Right ventricle myocardium inferior (tissue), 1 donor: ENCODE measurements at regions of chr2 and their contacts with region 1.

Region 1: DNA sequence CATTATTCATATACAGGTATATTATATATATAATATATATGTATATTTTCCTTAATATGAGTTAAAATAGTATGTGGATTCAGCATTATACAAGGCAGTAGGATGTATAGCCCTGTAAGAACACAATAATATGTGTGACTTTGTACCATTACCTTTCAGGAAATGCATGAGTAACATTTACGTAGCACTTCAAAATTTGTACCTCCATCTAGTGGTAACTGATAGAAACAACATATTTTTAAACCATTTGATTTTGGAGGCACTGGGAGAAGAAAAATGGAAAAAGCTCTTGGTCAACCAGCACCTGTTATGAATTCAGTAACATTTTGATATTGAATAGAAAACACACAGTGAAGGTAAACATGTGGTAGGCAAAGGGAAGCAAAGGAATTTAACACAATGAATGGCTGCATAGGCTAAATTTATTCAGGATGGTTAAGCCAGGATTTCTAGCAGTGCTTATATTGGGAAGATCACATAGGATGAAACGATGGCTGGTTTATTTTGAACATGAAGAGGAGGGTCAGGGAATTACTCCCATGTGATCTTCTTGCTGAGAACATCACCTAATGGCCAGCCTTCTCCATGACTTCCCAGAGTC is 565.5 kb downstream of the CCDC85A start:
- DNase-seq: no peak
- ATAC-seq: no peak

Region 2: GRCh38 chr2:56288838-56289580 is 460.2 kb before region 1 on chr2:
- intact Hi-C with region 1: loop called (anchors 5 kb)
- DNase-seq: no peak
- ATAC-seq: no peak

Region 3: DNA sequence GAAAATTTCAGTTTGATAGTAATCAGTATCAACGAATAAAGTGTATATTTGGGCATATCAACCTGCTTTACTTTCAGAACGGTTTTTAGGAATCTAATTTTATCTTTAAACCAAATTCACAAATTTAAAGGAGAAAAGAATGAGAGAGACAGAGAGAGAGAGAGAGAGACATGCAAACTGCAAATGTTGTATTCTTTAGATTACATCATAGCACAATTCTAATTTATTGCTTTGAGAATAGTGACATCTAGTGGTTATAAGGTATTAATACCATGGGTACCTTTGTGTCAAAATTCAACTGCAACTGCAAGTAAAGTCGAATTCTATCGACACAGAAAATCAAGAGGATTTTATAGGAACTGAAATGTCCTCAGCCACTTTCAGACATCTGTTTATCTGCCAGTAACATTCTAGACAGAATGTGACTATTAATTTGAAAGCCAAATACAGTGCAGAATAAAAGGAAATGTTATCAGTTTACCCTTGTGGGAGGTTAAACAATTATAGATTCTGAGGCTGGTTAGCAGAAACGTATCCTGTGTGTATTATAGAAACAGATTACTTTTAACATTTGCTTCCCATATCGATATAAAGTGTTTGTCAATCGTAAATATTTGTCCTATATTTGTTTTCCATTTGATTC is 767.6 kb after region 1 on chr2:
- intact Hi-C with region 1: loop called (anchors 10 kb)
- DNase-seq: no peak
- ATAC-seq: no peak